ENCODE measurements at regions of chr14 and their contacts with region 1.

Region 1: GRCh38 chr14:59343585-59343984 is 121.6 kb downstream of the GPR135 start:
- DNase-seq: peak; percentile 32 to 43
- H3K4me3 ChIP-seq: no peak overlapping the region
- H3K27ac ChIP-seq: peak overlapping the region; percentile 81
- H3K4me1 ChIP-seq: peaks cover 43% of the 10 kb centered on the region
- H3K27me3 ChIP-seq: no peaks in the 10 kb centered on the region
- CTCF ChIP-seq: no peak

Region 2: GRCh38 chr14:59189786-59190771 is 153.5 kb before region 1 on chr14:
- CTCF ChIA-PET with region 1: no interaction called
- POLR2A ChIA-PET with region 1: interaction called, 4 read pairs
- intact Hi-C with region 1: loop called (anchors 1 kb)
- DNase-seq: peak; percentile 78 to 79
- H3K4me3 ChIP-seq: peak overlapping the region; percentile 90
- H3K27ac ChIP-seq: no peak overlapping the region
- H3K4me1 ChIP-seq: peaks cover 29% of the 10 kb centered on the region
- H3K27me3 ChIP-seq: no peaks in the 10 kb centered on the region
- CTCF ChIP-seq: no peak; the same call in 1 of the 2 replicates

Region 3: GRCh38 chr14:59320763-59321640 is 22.6 kb before region 1 on chr14:
- CTCF ChIA-PET with region 1: no interaction called
- POLR2A ChIA-PET with region 1: no interaction called
- intact Hi-C with region 1: loop called (anchors 1 kb)
- DNase-seq: peak in 1 of 2 experiments; percentile 94
- H3K4me3 ChIP-seq: 0 out of 2 replicates have a peak overlapping the region, but pooled peaks have one; percentile 2
- H3K27ac ChIP-seq: peak overlapping the region; percentile 71
- H3K4me1 ChIP-seq: peaks cover 29% of the 10 kb centered on the region
- H3K27me3 ChIP-seq: no peaks in the 10 kb centered on the region
- CTCF ChIP-seq: no peak

Region 4: DNA sequence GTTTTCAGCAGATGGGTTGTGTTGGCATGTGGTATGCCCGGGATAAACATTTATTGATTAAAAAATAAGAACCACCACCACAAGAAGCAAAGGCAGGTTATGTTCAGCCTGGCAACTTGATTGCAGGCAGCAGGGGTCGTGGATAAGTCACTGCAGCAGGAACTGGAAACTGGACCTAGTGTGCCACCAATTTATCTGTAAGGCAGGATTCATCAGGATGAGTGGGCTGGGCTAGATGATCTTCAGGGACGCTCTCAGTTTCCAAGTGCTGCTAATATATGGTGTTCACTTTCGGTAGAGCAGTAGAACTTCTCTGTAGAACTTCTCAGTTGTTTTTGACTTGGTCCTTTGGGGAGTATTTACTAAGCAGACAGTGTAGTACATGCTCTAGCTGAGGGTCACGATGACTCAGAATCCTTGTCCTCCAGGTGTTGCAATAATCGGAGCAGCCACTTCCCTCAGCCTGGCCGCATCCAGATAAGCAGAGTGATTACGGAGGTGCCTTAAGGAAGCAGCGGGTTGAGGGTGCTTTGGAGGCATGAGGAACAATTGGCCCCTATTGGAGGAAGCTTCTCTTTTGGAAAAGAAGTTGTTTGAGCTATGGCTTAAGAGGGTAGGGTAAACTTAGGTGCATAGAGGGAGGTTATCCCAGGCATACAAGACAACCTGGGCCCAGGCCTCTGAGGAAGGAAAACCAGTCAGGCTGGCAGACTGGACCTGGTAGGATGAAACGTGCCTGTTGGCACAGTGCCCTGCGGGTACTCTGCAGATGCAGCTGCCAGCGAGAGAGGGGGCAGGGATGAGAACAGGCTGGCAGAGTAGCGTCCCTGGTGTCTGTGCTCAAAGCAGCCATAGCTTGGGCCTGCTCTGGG is 17.6 kb after region 1 on chr14:
- CTCF ChIA-PET with region 1: no interaction called
- POLR2A ChIA-PET with region 1: interaction called, 5 read pairs
- intact Hi-C with region 1: loop called (anchors 1 kb)
- DNase-seq: peak; percentile 88 to 99
- H3K4me3 ChIP-seq: peak overlapping the region; percentile 33; the same call in 1 of the 2 replicates
- H3K27ac ChIP-seq: peak overlapping the region; percentile 86
- H3K4me1 ChIP-seq: peaks cover 100% of the 10 kb centered on the region
- H3K27me3 ChIP-seq: no peaks in the 10 kb centered on the region
- CTCF ChIP-seq: no peak

Region 5: GRCh38 chr14:59438195-59438647 is 94.6 kb after region 1 on chr14:
- CTCF ChIA-PET with region 1: no interaction called
- POLR2A ChIA-PET with region 1: no interaction called
- intact Hi-C with region 1: loop called (anchors 5 kb)
- DNase-seq: peak in 1 of 2 experiments; percentile 59
- H3K4me3 ChIP-seq: no peak overlapping the region
- H3K27ac ChIP-seq: peak overlapping the region; percentile 11; the same call in 1 of the 2 replicates
- H3K4me1 ChIP-seq: peaks cover 13% of the 10 kb centered on the region; the same call in 1 of the 2 replicates
- H3K27me3 ChIP-seq: no peaks in the 10 kb centered on the region
- CTCF ChIP-seq: no peak

Region 6: GRCh38 chr14:59483900-59484638 is 140.5 kb after region 1 on chr14 and contains the starts of genes JKAMP and L3HYPDH:
- CTCF ChIA-PET with region 1: no interaction called
- POLR2A ChIA-PET with region 1: interaction called, 7 read pairs
- intact Hi-C with region 1: loop called (anchors 1 kb)
- DNase-seq: peak; percentile 89 to 96
- H3K4me3 ChIP-seq: peak within 1 kb of the TSS; percentile 99
- H3K27ac ChIP-seq: peak within 1 kb of the TSS; percentile 96
- H3K4me1 ChIP-seq: peaks cover 46% of the 10 kb centered on the region
- H3K27me3 ChIP-seq: no peaks in the 10 kb centered on the region
- CTCF ChIP-seq: peak; percentile 50
- total RNA-seq, gene JKAMP: 54.6 and 60.1 TPM in 2 replicates
- total RNA-seq, gene L3HYPDH: 96.3 and 121 TPM in 2 replicates

Measured in PC-9 (cell line).